Right ventricle myocardium superior (tissue), 1 donor: ENCODE measurements at regions of chr11 and their contacts with region 1.

Region 1: GRCh38 chr11:73177778-73178577 is 35.9 kb upstream of the FCHSD2 start:
- DNase-seq: peak; percentile 91
- ATAC-seq: peak; percentile 69

Region 2: DNA sequence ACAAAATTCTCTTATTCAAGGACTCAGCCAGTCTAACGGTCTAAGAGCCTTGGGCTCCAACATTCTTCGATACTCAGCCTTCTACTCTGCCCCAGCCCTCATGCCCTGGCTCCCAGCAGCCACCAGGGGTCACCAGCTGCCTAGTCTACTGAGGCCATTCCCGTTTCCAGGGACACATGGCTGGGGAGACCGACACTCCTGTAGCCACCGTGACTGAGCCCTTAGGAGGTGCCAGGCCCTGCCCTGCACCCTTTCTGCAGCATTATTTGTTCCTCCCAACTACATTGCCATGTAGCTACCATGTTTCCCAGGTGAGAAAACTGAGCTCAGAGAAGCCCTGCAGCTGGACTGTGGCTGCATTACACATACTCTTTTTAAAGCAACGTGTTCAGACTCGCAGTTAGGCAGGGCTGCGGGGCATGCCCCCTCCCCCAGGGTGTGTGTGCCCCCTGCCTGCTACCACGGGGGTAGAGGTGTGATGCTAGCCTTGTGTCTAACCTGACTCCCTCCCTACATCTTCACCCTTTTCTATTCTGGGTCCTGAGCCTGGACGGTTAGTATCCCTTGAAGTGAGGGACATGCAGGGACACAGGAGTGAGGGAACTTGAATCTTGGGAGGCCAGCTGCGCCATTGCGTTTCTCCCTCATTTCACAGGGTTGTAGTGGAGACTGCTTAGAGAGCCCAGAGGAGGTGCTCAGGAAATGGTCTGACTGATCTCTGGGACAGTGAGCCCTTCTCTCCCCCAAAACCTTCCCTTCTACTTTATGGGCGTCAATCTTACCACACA is 346.3 kb before region 1 on chr11:
- intact Hi-C with region 1: loop called (anchors 2 kb)
- DNase-seq: peak; percentile 90
- ATAC-seq: peak; percentile 80

Region 3: GRCh38 chr11:72924568-72925190 is 253.3 kb before region 1 on chr11:
- intact Hi-C with region 1: loop called (anchors 10 kb)
- DNase-seq: no peak
- ATAC-seq: peak; percentile 59

Region 4: DNA sequence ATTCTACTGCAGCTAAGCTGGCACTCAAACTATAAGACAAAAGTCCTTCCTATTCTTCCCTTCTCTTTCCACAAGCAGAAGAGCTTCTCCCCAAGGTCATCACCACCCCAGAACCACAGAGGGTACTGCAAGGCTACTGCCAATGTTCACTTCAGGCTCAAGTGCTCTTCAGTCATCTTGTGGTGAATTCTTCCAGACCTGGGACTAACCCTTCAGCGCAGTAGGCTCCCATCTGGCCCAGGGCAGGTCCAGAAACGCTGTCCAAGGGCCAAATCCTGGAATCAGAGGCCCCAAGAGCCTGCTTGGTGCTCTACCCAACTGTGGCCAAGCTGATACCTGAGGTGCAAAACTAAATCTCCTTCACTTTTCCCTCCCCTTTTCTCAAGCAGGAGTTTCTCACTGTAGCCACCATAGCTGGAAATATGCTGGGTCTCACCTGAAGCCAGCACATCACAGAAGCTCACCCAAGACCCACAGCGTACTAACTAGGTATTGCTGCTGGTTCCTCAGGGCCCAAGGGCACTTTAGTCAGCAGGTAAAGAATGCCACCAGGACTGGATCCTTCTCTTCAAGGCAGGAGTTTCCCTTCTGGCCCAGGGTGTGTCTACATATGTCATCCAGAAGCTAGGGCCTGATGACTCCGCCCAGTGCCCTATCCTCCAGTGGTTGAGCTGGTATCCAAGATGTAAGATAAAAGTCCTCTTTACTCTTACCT is 63.7 kb before region 1 on chr11:
- intact Hi-C with region 1: no loop called
- DNase-seq: no peak
- ATAC-seq: no peak